MCF 10A (cell line): ENCODE measurements at regions of chr6 and their contacts with region 1.

Region 1: GRCh38 chr6:158644231-158645063 is at the start of gene DYNLT1:
- DNase-seq: peak; percentile 90
- H3K4me3 Mint-ChIP-seq: peak within 1 kb of the TSS; percentile 93
- H3K27ac Mint-ChIP-seq: peak within 1 kb of the TSS; percentile 94
- H3K4me1 Mint-ChIP-seq: peaks cover 55% of the 10 kb centered on the region
- H3K27me3 Mint-ChIP-seq: no peaks in the 10 kb centered on the region
- CTCF ChIP-seq: no peak
- total RNA-seq, gene DYNLT1: 122 and 156 TPM in 2 replicates

Region 2: DNA sequence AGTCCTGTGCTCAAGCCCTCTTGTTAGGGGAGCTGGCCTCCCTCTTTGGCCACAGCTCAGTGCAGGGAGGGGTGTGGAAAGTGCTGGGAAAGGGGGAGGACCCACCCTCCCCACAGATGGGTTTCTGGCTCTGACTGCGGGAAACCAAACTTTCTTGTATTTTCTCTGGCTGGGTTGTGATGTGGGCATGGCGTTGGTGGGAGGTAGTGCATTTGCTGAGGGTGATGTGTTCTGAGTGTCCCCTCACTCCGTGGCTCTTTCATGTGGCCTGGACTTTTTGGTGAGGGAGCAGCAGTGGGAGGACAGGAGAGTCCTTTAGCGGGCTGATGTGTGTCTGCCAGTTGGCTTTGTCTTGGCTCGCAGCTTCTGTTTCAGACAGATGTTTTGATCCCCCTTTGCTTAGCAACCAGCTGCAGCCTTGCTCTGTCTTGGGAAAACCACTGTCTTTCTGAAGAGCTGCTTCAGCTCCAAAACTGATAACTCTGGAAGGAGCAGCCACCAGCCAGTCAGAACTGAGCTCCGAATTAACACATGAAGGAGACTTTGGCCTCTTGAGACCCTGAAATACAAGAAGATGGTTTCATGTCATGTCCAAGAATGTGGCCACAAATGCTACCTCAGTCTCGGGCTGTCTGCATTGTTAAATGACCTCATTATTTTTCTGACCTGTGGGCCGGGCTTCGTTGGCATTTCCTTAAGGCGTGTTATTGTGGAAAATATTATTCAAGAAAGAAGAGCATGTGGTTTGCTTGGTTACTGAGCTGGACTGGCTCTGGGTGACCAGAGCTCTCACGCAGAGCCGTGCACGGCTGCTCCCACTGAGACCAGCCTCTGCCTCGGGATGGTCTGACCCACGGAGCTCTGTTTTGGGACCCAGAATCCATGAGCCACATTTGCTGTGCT is 641.2 kb before region 1 on chr6:
- CTCF ChIA-PET with region 1: no interaction called
- POLR2A ChIA-PET with region 1: no interaction called
- intact Hi-C with region 1: no loop called
- DNase-seq: no peak
- H3K4me3 Mint-ChIP-seq: no peak overlapping the region
- H3K27ac Mint-ChIP-seq: peak overlapping the region; percentile 78
- H3K4me1 Mint-ChIP-seq: peaks cover 22% of the 10 kb centered on the region
- H3K27me3 Mint-ChIP-seq: no peaks in the 10 kb centered on the region
- CTCF ChIP-seq: no peak

Region 3: GRCh38 chr6:158559895-158560835 is 84.3 kb before region 1 on chr6 and contains the start of gene TMEM181:
- CTCF ChIA-PET with region 1: no interaction called
- POLR2A ChIA-PET with region 1: interaction called, 15 read pairs
- intact Hi-C with region 1: no loop called
- DNase-seq: peak; percentile 82
- H3K4me3 Mint-ChIP-seq: peak within 1 kb of the TSS; percentile 88
- H3K27ac Mint-ChIP-seq: peak within 1 kb of the TSS; percentile 84
- H3K4me1 Mint-ChIP-seq: peaks cover 17% of the 10 kb centered on the region
- H3K27me3 Mint-ChIP-seq: peaks cover 17% of the 10 kb centered on the region
- CTCF ChIP-seq: no peak
- total RNA-seq, gene TMEM181: 25.3 and 28.8 TPM in 2 replicates

Region 4: GRCh38 chr6:158631678-158632537 is 12.5 kb before region 1 on chr6:
- CTCF ChIA-PET with region 1: no interaction called
- POLR2A ChIA-PET with region 1: interaction called, 41 read pairs
- intact Hi-C with region 1: no loop called
- DNase-seq: peak; percentile 67
- H3K4me3 Mint-ChIP-seq: no peak overlapping the region
- H3K27ac Mint-ChIP-seq: peak overlapping the region; percentile 81
- H3K4me1 Mint-ChIP-seq: peaks cover 13% of the 10 kb centered on the region
- H3K27me3 Mint-ChIP-seq: no peaks in the 10 kb centered on the region
- CTCF ChIP-seq: no peak

Region 5: GRCh38 chr6:158669145-158670035 is 24.9 kb after region 1 on chr6:
- CTCF ChIA-PET with region 1: interaction called, 5 read pairs
- POLR2A ChIA-PET with region 1: interaction called, 10 read pairs
- intact Hi-C with region 1: no loop called
- DNase-seq: peak; percentile 26
- H3K4me3 Mint-ChIP-seq: no peak overlapping the region
- H3K27ac Mint-ChIP-seq: no peak overlapping the region
- H3K4me1 Mint-ChIP-seq: peaks cover 13% of the 10 kb centered on the region
- H3K27me3 Mint-ChIP-seq: no peaks in the 10 kb centered on the region
- CTCF ChIP-seq: no peak